Adrenal gland (tissue), 19 donors: ENCODE measurements at regions of chr2 and their contacts with region 1.

Region 1: DNA sequence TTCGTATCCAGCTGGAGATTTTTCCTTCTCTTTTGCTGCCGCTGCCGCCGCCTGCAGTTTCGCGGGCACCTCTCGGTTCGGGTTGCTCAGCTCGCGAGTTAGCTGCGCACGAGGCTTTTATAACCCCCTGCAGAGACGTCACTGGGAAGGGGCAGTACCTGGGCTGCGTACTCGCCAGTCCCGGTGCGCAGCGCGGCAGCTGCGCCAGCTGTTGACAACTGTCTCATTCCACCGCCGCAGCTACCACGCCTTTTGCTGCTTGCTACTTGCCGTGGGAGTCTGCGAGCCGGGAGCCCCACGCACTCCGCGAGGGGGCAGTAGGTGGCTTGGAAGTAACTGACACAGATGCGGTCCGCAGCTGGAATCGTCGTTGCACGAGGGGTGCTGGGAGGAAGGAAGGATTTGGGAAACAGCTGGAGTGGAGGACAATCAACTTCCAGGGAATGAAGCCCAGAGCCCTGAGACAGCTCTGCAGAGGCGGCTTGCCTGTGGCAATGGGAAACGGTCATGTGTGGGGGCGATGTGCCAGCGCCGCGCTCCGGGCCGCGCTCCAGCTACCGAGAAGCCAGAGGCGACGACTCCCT is at the start of gene TACR1:
- DNase-seq: peak; percentile 41 to 80 (median 60)
- H3K4me3 ChIP-seq: peak within 1 kb of the TSS in 2 of 4 donors; percentile 9 to 42
- H3K27ac ChIP-seq: no peak within 1 kb of the TSS
- H3K4me1 ChIP-seq: peaks cover 15 to 19% of the 10 kb centered on the region in 2 donors
- H3K27me3 ChIP-seq: peaks cover 37% of the 10 kb centered on the region
- CTCF ChIP-seq: peak; percentile 22 to 48 (median 37)
- POLR2A ChIP-seq: no peak
- total RNA-seq, gene TACR1: 0.28 to 1.9 (median 0.49) TPM in 8 of 9 donors, not detected in the other

Region 2: GRCh38 chr2:75268112-75268511 is 68.6 kb after region 1 on chr2:
- intact Hi-C with region 1: no loop called
- DNase-seq: no peak
- H3K4me3 ChIP-seq: no peak overlapping the region
- H3K27ac ChIP-seq: no peak overlapping the region
- H3K4me1 ChIP-seq: no peaks in the 10 kb centered on the region
- H3K27me3 ChIP-seq: no peaks in the 10 kb centered on the region
- CTCF ChIP-seq: no peak
- POLR2A ChIP-seq: no peak

Region 3: DNA sequence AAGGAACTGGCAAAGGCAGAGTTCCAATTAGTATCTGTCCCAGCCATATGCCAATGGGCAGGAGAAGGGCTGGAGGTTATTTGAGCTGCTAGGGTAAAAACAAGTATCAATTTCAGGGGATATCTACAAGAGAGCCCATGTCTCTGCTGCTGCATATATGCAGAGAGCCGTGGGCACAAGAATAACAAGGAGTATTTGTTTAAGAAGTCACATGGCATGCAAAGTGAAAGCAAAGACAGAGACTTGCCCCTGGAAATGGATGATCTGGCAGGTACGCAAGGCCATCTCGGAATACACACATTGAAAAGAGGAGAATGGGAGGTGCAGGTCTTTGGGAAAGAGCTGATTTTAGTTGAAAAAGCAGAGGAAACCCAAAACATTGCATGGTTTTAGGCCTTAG is 190.6 kb after region 1 on chr2:
- intact Hi-C with region 1: loop called in 1 of 2 experiments (anchors 10 kb)
- DNase-seq: no peak
- H3K4me3 ChIP-seq: no peak overlapping the region
- H3K27ac ChIP-seq: no peak overlapping the region
- H3K4me1 ChIP-seq: no peaks in the 10 kb centered on the region
- H3K27me3 ChIP-seq: no peaks in the 10 kb centered on the region
- CTCF ChIP-seq: no peak
- POLR2A ChIP-seq: no peak

Region 4: GRCh38 chr2:75406131-75406581 is 206.6 kb after region 1 on chr2:
- intact Hi-C with region 1: no loop called
- DNase-seq: no peak
- H3K4me3 ChIP-seq: no peak overlapping the region
- H3K27ac ChIP-seq: no peak overlapping the region
- H3K4me1 ChIP-seq: no peaks in the 10 kb centered on the region
- H3K27me3 ChIP-seq: peaks cover 12% of the 10 kb centered on the region
- CTCF ChIP-seq: no peak
- POLR2A ChIP-seq: no peak